Testis (tissue), 5 donors: ENCODE measurements at regions of chr11 and their contacts with region 1.

Region 1: GRCh38 chr11:12043959-12044819 is 35.8 kb upstream of the DKK3 start:
- DNase-seq: peak; percentile 89
- H3K4me3 ChIP-seq: no peak overlapping the region
- H3K27ac ChIP-seq: no peak overlapping the region
- H3K4me1 ChIP-seq: peaks cover 8% of the 10 kb centered on the region
- H3K27me3 ChIP-seq: no peaks in the 10 kb centered on the region
- CTCF ChIP-seq: peak; percentile 96 to 98 (median 97)
- POLR2A ChIP-seq: no peak

Region 2: GRCh38 chr11:11806586-11806985 is 237.6 kb before region 1 on chr11:
- intact Hi-C with region 1: loop called (anchors 10 kb)
- DNase-seq: no peak
- H3K4me3 ChIP-seq: no peak overlapping the region
- H3K27ac ChIP-seq: peak overlapping the region in 1 of 2 donors; percentile 30
- H3K4me1 ChIP-seq: peaks cover 8% of the 10 kb centered on the region
- H3K27me3 ChIP-seq: no peaks in the 10 kb centered on the region
- CTCF ChIP-seq: no peak
- POLR2A ChIP-seq: no peak

Region 3: GRCh38 chr11:11931461-11932055 is 112.6 kb before region 1 on chr11:
- intact Hi-C with region 1: loop called (anchors 10 kb)
- DNase-seq: peak; percentile 37
- H3K4me3 ChIP-seq: no peak overlapping the region
- H3K27ac ChIP-seq: no peak overlapping the region
- H3K4me1 ChIP-seq: no peaks in the 10 kb centered on the region
- H3K27me3 ChIP-seq: no peaks in the 10 kb centered on the region
- CTCF ChIP-seq: peak; percentile 52 to 71 (median 55)
- POLR2A ChIP-seq: no peak